GM12878 (cell line): ENCODE measurements at regions of chr1 and their contacts with region 1.

Region 1: GRCh38 chr1:104746994-104747393 is 997.3 kb downstream of the AMY1C start:
- DNase-seq: no peak
- ATAC-seq: peak; percentile 86
- H3K4me3 ChIP-seq: 0 out of 2 replicates have a peak overlapping the region, but pooled peaks have one; percentile 42
- H3K27ac ChIP-seq: no peak overlapping the region
- H3K4me1 ChIP-seq: peaks cover 15% of the 10 kb centered on the region; the same call in 1 of the 2 replicates
- H3K27me3 ChIP-seq: no peaks in the 10 kb centered on the region
- CTCF ChIP-seq: no peak
- EP300 ChIP-seq: no peak
- POLR2A ChIP-seq: no peak
- RAD21 ChIP-seq: no peak

Region 2: DNA sequence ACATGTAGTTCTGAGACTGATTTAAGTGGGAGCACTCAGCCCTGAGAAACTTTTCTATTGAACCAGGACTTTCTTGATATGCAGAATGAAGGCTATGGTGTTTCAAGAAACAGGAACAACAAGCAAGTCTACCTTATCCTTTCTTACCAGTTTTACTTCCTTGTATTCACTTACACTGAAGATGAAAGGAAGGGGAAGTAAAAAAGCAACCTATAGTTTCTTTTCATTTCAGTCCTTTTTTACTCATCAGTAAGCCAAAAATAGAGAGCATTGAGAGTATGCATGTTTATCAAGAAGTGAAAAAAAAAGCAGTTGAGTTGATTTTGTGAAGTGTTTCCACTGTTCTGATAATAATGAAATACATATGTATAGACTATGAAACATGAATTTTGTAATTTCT is 13.0 kb after region 1 on chr1:
- CTCF ChIA-PET with region 1: interaction called, 3 read pairs
- POLR2A ChIA-PET with region 1: interaction called, 4 read pairs
- RAD21 ChIA-PET with region 1: interaction called, 7 read pairs
- SMC1A ChIA-PET with region 1: interaction called, 8 read pairs
- in situ Hi-C with region 1: no loop called
- intact Hi-C with region 1: loop called (anchors 2 kb)
- DNase-seq: peak; percentile 48
- ATAC-seq: peak; percentile 93
- H3K4me3 ChIP-seq: no peak overlapping the region
- H3K27ac ChIP-seq: peak overlapping the region; percentile 46
- H3K4me1 ChIP-seq: peaks cover 9% of the 10 kb centered on the region
- H3K27me3 ChIP-seq: no peaks in the 10 kb centered on the region
- CTCF ChIP-seq: no peak
- EP300 ChIP-seq: peak; percentile 69 to 74; a peak in 2 of 4 replicates
- POLR2A ChIP-seq: no peak
- RAD21 ChIP-seq: no peak

Region 3: GRCh38 chr1:104765085-104765484 is 18.1 kb after region 1 on chr1:
- CTCF ChIA-PET with region 1: interaction called, 4 read pairs
- POLR2A ChIA-PET with region 1: interaction called, 4 read pairs
- RAD21 ChIA-PET with region 1: interaction called, 7 read pairs
- SMC1A ChIA-PET with region 1: interaction called, 11 read pairs
- in situ Hi-C with region 1: no loop called
- intact Hi-C with region 1: loop called (anchors 2 kb)
- DNase-seq: peak; percentile 59
- ATAC-seq: peak; percentile 92
- H3K4me3 ChIP-seq: no peak overlapping the region
- H3K27ac ChIP-seq: no peak overlapping the region
- H3K4me1 ChIP-seq: peaks cover 4% of the 10 kb centered on the region
- H3K27me3 ChIP-seq: no peaks in the 10 kb centered on the region
- CTCF ChIP-seq: no peak
- EP300 ChIP-seq: no peak; a peak in 1 of 4 replicates
- POLR2A ChIP-seq: no peak
- RAD21 ChIP-seq: no peak